Ascending aorta (tissue), 2 donors: ENCODE measurements at regions of chr1 and their contacts with region 1.

Region 1: DNA sequence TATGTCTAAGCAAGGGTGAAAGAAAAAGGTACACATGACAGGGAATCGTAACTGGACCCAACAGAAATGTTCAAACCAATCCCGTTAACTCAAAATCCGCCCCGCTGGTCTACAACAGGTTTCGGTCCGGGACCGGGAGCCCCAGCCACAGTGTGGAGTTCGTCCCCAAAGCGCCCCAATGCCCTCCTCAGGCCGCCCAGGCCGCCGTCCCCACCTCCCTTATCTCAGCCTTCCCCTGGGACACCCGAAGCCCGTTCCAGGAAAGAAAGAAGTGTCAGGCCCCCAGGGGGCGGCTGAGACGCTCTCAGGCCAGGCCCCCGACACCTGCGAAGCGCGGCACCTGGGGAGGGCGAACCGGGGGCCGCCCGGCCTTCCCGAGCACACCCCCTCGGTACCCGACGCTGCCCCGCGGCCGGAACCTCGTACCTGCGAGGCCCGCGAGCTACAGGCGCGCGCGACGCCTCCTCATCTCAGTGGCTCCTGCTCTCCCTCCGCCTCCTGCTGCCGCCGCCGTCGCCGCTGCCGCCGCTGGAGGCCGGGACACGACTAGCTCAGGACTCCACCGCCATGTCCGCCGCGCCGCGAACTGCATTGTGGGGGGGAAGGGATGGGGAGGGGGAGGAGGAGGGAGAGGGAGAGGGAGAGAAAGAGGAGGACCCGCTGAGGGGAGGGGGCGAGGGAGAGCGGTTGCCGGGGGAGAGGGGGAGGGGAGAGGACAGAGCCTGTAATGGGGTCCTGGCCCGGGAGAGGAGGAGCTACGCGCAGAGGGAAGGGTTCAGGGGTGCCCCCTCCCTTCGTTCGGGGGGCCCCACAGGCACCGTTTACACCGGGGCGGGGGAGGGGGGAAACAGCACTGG is at the start of gene TUT4:
- DNase-seq: peak; percentile 12 to 84
- H3K4me3 ChIP-seq: peak within 1 kb of the TSS; percentile 94 to 98
- H3K27ac ChIP-seq: peak within 1 kb of the TSS; percentile 86 to 92
- H3K4me1 ChIP-seq: peaks cover 4 to 5% of the 10 kb centered on the region in 2 donors
- H3K27me3 ChIP-seq: no peaks in the 10 kb centered on the region
- CTCF ChIP-seq: no peak
- total RNA-seq, gene TUT4: 36.2 TPM

Region 2: GRCh38 chr1:50978144-50978851 is 1574.4 kb before region 1 on chr1:
- intact Hi-C with region 1: no loop called
- DNase-seq: peak in 1 of 2 donors; percentile 74
- H3K4me3 ChIP-seq: peak overlapping the region; percentile 79 to 87
- H3K27ac ChIP-seq: peak overlapping the region; percentile 92
- H3K4me1 ChIP-seq: no peaks in the 10 kb centered on the region
- H3K27me3 ChIP-seq: no peaks in the 10 kb centered on the region
- CTCF ChIP-seq: no peak

Region 3: DNA sequence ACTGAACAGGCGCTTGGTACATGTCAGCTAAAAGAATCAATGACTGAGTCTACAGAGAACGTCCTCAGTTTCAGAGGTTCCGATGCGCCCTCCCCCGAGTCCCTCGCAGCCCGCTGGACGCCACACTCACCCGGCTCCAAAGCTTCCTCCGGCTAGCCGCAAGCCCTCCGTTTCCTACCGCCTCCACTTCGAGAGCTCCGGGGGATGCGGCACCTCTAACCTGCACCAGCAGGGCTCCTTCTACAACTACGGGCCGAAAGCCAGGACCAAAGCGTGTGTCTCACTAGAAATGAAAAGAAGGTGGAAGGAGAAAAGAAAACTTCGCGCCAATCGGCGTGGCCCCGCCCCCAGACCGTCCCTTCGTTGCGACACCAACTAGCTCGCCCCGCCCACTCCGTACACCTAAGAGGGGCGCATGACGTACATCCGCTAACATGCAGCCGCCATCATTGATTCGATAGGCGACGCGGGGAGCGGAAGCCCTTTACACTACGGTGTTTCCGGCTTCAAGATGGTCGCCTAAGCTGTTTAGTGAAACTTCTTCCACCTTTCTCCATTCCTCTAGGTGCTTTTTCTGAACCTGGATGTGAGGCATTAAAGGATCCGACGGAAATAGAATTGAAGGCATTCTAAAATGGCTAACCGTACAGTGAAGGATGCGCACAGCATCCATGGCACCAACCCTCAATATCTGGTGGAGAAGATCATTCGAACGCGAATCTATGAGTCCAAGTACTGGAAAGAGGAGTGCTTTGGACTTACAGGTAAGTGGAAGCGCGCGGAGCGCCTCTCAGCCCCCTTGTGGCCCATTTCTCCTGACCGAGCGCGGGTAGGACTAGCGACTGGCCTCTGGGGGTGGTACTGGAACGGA is 148.4 kb before region 1 on chr1 and contains the starts of genes ORC1 and PRPF38A:
- intact Hi-C with region 1: loop called (anchors 2 kb)
- DNase-seq: peak; percentile 85 to 98
- H3K4me3 ChIP-seq: peak within 1 kb of the TSS; percentile 87 to 91
- H3K27ac ChIP-seq: peak within 1 kb of the TSS; percentile 85 to 96
- H3K4me1 ChIP-seq: peaks cover 10 to 15% of the 10 kb centered on the region in 2 donors
- H3K27me3 ChIP-seq: no peaks in the 10 kb centered on the region
- CTCF ChIP-seq: peak; percentile 32 to 59 (median 51)
- total RNA-seq, gene ORC1: not detected
- total RNA-seq, gene PRPF38A: 20.3 TPM

Region 4: DNA sequence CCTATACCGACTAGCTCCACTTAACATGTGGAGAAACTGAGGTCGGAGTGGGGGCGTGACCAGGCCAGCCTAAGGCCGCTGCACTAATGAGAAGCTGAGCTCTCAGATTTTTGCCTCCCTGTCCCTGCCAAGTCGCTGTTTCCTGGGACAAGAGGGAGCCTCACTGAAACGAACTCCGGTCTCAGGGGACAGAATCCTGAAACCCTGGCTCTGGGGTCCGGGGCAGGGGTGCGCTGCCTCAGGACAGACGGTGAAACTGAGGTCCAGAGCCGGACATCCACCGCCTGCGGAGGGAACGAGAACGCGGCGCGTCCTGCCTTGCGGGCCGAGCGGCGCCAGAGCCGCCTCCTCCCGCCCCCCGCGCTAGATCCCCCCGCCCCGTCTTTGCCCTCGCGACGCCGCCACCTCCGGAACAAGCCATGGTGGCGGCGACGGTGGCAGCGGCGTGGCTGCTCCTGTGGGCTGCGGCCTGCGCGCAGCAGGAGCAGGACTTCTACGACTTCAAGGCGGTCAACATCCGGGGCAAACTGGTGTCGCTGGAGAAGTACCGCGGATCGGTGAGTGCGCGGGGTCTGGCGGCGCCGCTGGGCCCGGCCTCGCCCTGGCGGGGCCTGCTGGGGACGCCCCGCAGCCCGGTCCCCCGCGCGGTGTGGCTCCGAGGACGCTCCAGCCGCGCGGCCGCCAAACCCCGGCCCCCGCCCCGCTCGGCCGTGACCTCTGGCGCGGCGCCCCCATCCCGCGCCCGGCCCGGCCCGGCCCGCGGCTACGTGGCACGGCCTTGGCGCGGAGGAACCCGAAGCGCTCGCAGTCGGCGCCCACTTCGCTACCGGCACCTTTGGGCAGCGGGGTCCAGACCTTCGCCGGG is 49.5 kb after region 1 on chr1 and contains the start of gene GPX7:
- intact Hi-C with region 1: loop called (anchors 1 kb)
- DNase-seq: peak in 1 of 2 donors; percentile 71
- H3K4me3 ChIP-seq: peak within 1 kb of the TSS; percentile 81 to 82
- H3K27ac ChIP-seq: peak within 1 kb of the TSS; percentile 74 to 87
- H3K4me1 ChIP-seq: peaks cover 0 to 16% of the 10 kb centered on the region in 2 donors
- H3K27me3 ChIP-seq: no peaks in the 10 kb centered on the region
- CTCF ChIP-seq: no peak
- total RNA-seq, gene GPX7: 6.3 TPM

Region 5: GRCh38 chr1:52697795-52698674 is 145.3 kb after region 1 on chr1 and contains the start of gene COA7:
- intact Hi-C with region 1: loop called (anchors 2 kb)
- DNase-seq: peak; percentile 27 to 90
- H3K4me3 ChIP-seq: peak within 1 kb of the TSS; percentile 71 to 85
- H3K27ac ChIP-seq: peak within 1 kb of the TSS; percentile 78 to 85
- H3K4me1 ChIP-seq: peaks cover 0 to 3% of the 10 kb centered on the region in 2 donors
- H3K27me3 ChIP-seq: no peaks in the 10 kb centered on the region
- CTCF ChIP-seq: no peak
- total RNA-seq, gene COA7: 7.6 TPM

Region 6: DNA sequence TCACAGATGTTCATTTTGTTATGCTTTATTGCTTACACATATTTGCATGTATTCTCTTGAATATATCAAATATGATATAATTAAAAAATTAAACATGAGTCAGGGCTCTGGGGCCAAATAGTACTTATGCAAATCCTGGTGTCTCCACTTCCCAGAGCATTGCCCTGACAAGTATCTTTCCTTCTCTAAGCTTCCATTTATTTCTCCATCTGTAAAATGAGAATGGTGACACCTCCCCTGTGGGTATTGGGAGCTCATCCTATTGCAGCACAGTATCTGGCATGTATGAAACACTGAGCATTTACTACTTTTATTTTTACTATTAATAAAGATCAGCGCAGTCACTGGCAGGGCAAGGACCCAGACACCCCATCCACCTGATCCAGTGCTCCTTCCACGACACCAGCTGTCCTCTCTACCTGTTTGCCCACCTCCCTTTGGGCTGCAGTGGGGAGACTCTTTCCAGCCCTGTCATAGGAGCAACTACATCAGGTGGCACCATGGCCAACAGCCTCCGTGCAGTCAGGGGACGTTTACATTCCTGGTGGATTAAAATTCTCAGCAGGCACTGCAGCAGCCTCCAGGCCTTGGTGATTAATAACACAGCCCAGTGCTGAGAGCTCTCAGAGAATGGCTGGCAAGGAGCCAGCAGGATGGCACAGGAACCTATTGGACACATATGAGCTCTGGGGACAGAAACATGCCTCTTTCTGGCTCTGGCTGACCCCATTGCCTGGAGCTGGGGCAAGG is 1019.5 kb after region 1 on chr1:
- intact Hi-C with region 1: no loop called
- DNase-seq: no peak
- H3K4me3 ChIP-seq: no peak overlapping the region
- H3K27ac ChIP-seq: no peak overlapping the region
- H3K4me1 ChIP-seq: no peaks in the 10 kb centered on the region
- H3K27me3 ChIP-seq: no peaks in the 10 kb centered on the region
- CTCF ChIP-seq: no peak